MCF 10A (cell line): ENCODE measurements at regions of chr5 and their contacts with region 1.

Region 1: DNA sequence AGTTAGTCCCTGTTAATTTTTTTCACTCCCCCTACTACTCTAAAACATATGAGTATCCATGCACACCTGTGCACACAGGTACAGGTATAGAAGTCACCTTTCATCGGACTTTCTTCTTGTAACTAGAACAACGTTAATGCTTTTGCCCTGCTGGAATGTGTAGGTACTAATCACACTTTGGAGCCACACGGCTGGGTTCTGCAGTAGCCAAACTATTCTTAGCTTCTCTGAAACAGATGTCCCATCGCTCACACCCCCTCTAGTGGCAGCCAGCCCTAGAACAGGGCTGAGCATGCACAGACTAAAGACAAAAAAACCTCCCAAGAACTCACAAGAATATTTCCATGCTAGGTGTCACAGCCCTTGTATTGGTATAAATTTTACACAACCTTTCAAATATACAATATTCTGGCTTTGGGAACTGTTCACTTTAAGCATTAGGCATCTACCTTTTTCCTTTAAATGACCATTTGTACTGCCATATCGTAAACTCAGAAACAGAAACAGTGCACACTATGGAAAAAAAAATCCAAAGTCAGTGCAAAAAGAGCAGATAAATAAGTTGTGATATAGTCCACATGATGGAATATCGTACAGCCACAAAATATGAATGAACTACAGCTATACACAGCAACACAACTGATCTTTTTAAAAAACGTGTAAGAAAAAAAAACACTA is 64.0 kb downstream of the RETREG1 start:
- DNase-seq: peak; percentile 70
- H3K4me3 Mint-ChIP-seq: no peak overlapping the region
- H3K27ac Mint-ChIP-seq: no peak overlapping the region
- H3K4me1 Mint-ChIP-seq: peaks cover 16% of the 10 kb centered on the region
- H3K27me3 Mint-ChIP-seq: no peaks in the 10 kb centered on the region
- CTCF ChIP-seq: peak; percentile 68

Region 2: DNA sequence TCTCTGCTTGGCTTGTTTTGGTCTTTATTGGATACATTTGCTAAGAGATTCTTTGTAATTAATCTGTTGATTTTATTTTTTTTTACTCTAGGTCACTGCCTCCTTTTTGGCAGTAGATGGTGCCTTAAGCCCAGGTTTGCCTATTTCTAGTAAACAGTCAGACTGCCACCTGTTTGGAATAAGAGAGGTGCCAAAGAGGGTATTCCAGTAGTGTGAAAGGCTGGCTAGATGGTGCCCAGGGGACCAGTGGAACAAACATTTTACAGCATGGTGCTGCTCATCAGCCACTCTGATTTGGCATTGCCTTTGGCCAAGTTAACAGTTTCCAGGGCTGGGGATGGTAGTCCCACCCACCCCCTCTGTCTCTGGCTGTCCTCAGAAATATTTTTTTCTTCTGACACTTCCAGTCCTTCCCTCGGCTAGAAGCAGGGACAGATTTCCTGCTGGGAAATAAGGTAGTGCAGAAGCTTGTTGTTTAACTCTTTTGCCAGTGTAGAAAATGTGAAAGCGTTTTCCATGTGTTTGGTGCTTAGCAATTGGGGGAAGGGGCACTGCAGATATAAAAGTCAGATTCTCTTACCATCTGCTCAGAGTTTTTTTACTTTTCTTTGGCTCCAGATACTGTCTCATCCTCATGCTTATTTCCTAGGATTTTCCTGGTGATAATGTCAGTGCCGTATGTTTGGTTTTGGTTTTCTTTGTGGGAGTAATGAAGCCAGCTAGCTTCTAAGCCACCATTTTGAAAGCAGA is 1089.4 kb before region 1 on chr5:
- CTCF ChIA-PET with region 1: no interaction called
- POLR2A ChIA-PET with region 1: no interaction called
- intact Hi-C with region 1: loop called (anchors 5 kb)
- DNase-seq: no peak
- H3K4me3 Mint-ChIP-seq: no peak overlapping the region
- H3K27ac Mint-ChIP-seq: no peak overlapping the region
- H3K4me1 Mint-ChIP-seq: no peaks in the 10 kb centered on the region
- H3K27me3 Mint-ChIP-seq: peaks cover 10% of the 10 kb centered on the region
- CTCF ChIP-seq: peak; percentile 37

Region 3: GRCh38 chr5:16456103-16456832 is 96.5 kb before region 1 on chr5:
- CTCF ChIA-PET with region 1: interaction called, 17 read pairs
- POLR2A ChIA-PET with region 1: no interaction called
- intact Hi-C with region 1: no loop called
- DNase-seq: peak; percentile 73
- H3K4me3 Mint-ChIP-seq: peak overlapping the region; percentile 13
- H3K27ac Mint-ChIP-seq: peak overlapping the region; percentile 83
- H3K4me1 Mint-ChIP-seq: peaks cover 34% of the 10 kb centered on the region
- H3K27me3 Mint-ChIP-seq: no peaks in the 10 kb centered on the region
- CTCF ChIP-seq: peak; percentile 69

Region 4: GRCh38 chr5:16489322-16489791 is 63.4 kb before region 1 on chr5:
- CTCF ChIA-PET with region 1: interaction called, 147 read pairs
- POLR2A ChIA-PET with region 1: interaction called, 14 read pairs
- intact Hi-C with region 1: loop called (anchors 1 kb)
- DNase-seq: peak; percentile 48
- H3K4me3 Mint-ChIP-seq: no peak overlapping the region
- H3K27ac Mint-ChIP-seq: peak overlapping the region; percentile 29
- H3K4me1 Mint-ChIP-seq: peaks cover 16% of the 10 kb centered on the region
- H3K27me3 Mint-ChIP-seq: no peaks in the 10 kb centered on the region
- CTCF ChIP-seq: peak; percentile 68

Region 5: GRCh38 chr5:16508730-16509531 is 43.9 kb before region 1 on chr5:
- CTCF ChIA-PET with region 1: interaction called, 13 read pairs
- POLR2A ChIA-PET with region 1: interaction called, 10 read pairs
- intact Hi-C with region 1: loop called (anchors 5 kb)
- DNase-seq: peak; percentile 81
- H3K4me3 Mint-ChIP-seq: peak overlapping the region; percentile 75
- H3K27ac Mint-ChIP-seq: peak overlapping the region; percentile 97
- H3K4me1 Mint-ChIP-seq: peaks cover 30% of the 10 kb centered on the region
- H3K27me3 Mint-ChIP-seq: no peaks in the 10 kb centered on the region
- CTCF ChIP-seq: no peak

Region 6: GRCh38 chr5:16568875-16569580 is 16.2 kb after region 1 on chr5:
- CTCF ChIA-PET with region 1: interaction called, 45 read pairs
- POLR2A ChIA-PET with region 1: interaction called, 6 read pairs
- intact Hi-C with region 1: no loop called
- DNase-seq: peak; percentile 92
- H3K4me3 Mint-ChIP-seq: no peak overlapping the region
- H3K27ac Mint-ChIP-seq: no peak overlapping the region
- H3K4me1 Mint-ChIP-seq: peaks cover 22% of the 10 kb centered on the region
- H3K27me3 Mint-ChIP-seq: no peaks in the 10 kb centered on the region
- CTCF ChIP-seq: no peak

Region 7: GRCh38 chr5:16666883-16667398 is 114.1 kb after region 1 on chr5:
- CTCF ChIA-PET with region 1: interaction called, 20 read pairs
- POLR2A ChIA-PET with region 1: no interaction called
- intact Hi-C with region 1: loop called (anchors 2 kb)
- DNase-seq: peak; percentile 36
- H3K4me3 Mint-ChIP-seq: no peak overlapping the region
- H3K27ac Mint-ChIP-seq: no peak overlapping the region
- H3K4me1 Mint-ChIP-seq: no peaks in the 10 kb centered on the region
- H3K27me3 Mint-ChIP-seq: no peaks in the 10 kb centered on the region
- CTCF ChIP-seq: peak; percentile 34

Region 8: DNA sequence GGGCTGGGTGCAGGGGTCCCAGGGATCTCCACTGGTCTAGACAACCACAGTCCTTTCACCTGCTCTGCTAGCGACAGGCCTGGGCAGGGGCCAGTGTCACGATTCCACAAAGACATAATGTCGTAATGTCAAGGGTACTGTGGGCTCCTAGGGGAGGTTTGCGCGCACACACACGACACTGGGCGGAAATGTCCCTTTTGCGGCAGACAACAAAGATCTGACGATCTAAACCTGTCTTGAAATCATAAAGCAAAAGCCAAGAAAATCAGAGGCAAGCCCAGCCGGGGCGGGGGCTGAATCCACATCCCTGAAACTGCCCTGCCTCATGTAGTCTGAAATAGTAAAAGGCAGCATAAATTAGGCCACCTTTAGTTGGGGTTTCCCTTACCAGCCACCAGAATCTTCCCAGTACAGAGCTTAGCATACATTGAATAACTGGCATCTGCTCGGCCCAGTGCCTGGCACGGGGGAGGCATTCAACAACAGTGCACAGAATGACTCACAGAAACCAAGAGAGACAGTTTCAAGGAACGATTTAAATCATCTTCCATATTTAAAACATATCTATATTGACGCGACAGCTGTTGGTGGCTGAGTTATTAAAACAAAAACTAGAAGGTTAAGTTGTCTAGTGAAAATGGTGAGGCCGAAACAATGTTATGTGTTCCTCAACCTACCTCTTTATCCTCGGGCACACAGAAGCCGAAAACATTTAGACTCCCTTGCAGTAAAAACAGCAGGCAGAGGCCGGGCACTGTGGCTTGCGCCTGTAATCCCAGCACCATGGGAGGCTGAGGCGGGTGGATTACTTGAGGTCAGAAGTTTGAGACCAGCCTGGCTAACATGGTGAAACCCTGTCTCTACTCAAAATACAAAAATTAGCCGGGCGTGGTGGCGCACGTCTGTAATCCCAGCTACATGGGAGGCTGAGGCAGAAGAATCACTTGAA is 232.3 kb after region 1 on chr5:
- CTCF ChIA-PET with region 1: no interaction called
- POLR2A ChIA-PET with region 1: no interaction called
- intact Hi-C with region 1: no loop called
- DNase-seq: peak; percentile 51
- H3K4me3 Mint-ChIP-seq: no peak overlapping the region
- H3K27ac Mint-ChIP-seq: no peak overlapping the region
- H3K4me1 Mint-ChIP-seq: peaks cover 25% of the 10 kb centered on the region
- H3K27me3 Mint-ChIP-seq: no peaks in the 10 kb centered on the region
- CTCF ChIP-seq: no peak